ENCODE measurements at regions of chr6 and their contacts with region 1.

Region 1: DNA sequence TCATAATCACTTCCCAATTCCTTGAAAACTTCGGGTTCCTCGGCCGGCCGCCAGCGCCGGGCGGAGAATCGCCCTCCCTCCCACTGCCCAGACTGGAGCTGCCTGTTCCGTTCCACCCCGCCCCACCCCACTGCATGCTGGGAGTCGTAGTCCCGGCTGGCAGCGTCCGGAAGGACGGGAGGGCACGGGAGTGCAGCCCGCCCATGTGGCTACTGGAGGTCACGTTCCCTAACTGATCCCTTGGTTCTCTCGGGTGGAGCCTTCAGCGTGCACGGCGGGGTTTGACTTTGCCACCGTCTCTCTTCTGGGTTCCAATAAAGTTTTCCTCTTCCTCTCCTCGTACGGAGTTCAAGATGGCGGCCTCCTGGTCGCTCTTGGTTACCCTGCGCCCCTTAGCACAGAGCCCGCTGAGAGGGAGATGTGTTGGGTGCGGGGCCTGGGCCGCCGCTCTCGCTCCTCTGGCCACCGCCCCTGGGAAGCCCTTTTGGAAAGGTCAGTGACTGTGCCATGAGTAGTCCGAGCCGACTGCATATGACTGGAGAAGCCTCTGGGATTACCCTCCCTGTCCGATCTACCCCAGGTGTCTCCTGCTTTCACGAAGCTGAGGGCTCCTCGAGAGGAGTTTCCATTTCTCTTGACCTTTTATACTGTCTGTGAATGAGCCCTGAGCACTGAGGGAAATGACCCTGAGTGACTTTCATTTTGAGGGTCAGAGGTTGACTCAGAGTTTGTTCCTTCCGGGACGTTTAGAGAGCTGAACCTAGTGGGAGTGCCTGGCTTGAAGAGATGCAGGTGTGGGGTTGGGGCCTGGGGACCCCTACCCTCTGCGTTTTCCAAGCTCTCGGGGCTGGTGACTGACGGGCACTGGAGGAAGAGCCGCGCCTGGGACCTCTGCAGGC is at the start of gene AFG1L:
- DNase-seq: peak; percentile 77 to 96 (median 84)
- ATAC-seq: peak; percentile 90
- H3K4me3 Mint-ChIP-seq: peak within 1 kb of the TSS; percentile 90 to 99 (median 98)
- H3K27ac Mint-ChIP-seq: peak within 1 kb of the TSS; percentile 98 to 100 (median 99)
- H3K4me1 Mint-ChIP-seq: peaks cover 12 to 31% (median 27%) of the 10 kb centered on the region in 4 donors
- H3K27me3 Mint-ChIP-seq: no peaks in the 10 kb centered on the region
- polyA plus RNA-seq, gene AFG1L: 2.8 to 4.4 (median 3.8) TPM

Region 2: DNA sequence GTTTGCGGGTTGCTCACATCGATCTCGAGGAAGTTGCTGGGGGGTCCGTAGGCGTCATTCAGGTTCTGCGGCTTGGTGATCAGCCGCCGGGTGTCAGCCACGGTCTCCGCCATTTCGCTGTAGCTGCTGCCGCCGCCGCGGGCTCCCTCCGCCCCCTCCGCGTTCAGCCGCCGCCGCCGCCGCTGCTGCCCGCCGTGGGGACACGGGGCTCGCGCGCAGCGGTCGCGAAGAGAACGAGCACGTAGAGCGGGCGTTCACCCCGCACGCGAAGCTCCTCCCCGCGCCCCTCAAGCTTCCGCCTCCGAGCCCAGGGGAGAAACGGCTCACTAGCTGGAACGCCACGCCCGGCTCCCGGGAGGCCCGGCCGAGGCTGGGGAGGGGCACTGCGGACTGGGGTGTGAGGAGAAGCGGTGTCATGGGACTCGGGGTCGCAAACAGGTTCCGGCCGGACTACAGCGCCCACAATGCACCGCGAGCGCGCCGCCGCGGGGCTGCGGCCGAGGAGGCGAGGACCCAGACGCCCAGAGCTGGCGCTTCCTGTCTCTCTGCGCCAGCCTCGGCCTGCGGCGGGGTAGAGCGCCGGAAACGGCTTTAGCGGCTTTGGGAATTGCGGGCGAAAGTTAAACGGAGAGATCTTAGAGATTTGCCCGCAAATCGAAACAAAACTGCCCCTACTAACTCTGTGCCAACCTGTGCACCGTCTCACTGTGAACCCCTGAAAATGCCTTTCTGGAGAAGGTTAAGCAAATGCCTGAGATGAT is 34.0 kb before region 1 on chr6 and contains the start of gene SNX3:
- POLR2A ChIA-PET with region 1: interaction called, 36 read pairs
- DNase-seq: peak; percentile 78 to 95 (median 87)
- ATAC-seq: peak; percentile 82 to 83
- H3K4me3 Mint-ChIP-seq: peak within 1 kb of the TSS; percentile 86 to 97 (median 92)
- H3K27ac Mint-ChIP-seq: peak within 1 kb of the TSS; percentile 93 to 99 (median 96)
- H3K4me1 Mint-ChIP-seq: peaks cover 5 to 44% (median 27%) of the 10 kb centered on the region in 4 donors
- H3K27me3 Mint-ChIP-seq: no peaks in the 10 kb centered on the region
- polyA plus RNA-seq, gene SNX3: 163 to 227 (median 176) TPM